Gastrocnemius medialis (tissue), 4 donors: ENCODE measurements at regions of chr7 and their contacts with region 1.

Region 1: GRCh38 chr7:28408960-28409715 is 3.2 kb upstream of the CREB5 start:
- DNase-seq: peak; percentile 94 to 98
- ATAC-seq: peak; percentile 72 to 80
- H3K4me3 ChIP-seq: peak overlapping the region; percentile 61 to 92 (median 72)
- H3K27ac ChIP-seq: peak overlapping the region; percentile 91 to 98 (median 94)
- H3K4me1 ChIP-seq: peaks cover 9 to 21% of the 10 kb centered on the region in 2 donors
- H3K27me3 ChIP-seq: no peaks in the 10 kb centered on the region
- CTCF ChIP-seq: no peak
- POLR2A ChIP-seq: peak; percentile 90 to 91

Region 2: GRCh38 chr7:27662490-27663205 is 746.5 kb before region 1 on chr7 and contains the start of gene HIBADH:
- in situ Hi-C with region 1: no loop called
- intact Hi-C with region 1: loop called (anchors 10 kb)
- DNase-seq: peak; percentile 99 to 100
- ATAC-seq: peak; percentile 96 to 98
- H3K4me3 ChIP-seq: peak within 1 kb of the TSS; percentile 73 to 99 (median 92)
- H3K27ac ChIP-seq: peak within 1 kb of the TSS; percentile 95 to 100 (median 97)
- H3K4me1 ChIP-seq: peaks cover 10 to 14% of the 10 kb centered on the region in 2 donors
- H3K27me3 ChIP-seq: no peaks in the 10 kb centered on the region
- CTCF ChIP-seq: peak; percentile 12 to 46 (median 29)
- POLR2A ChIP-seq: peak; percentile 96 to 99
- total RNA-seq, gene HIBADH: 42.2 to 56.4 (median 49.0) TPM

Region 3: GRCh38 chr7:28179120-28180030 is 229.8 kb before region 1 on chr7:
- in situ Hi-C with region 1: no loop called
- intact Hi-C with region 1: loop called (anchors 5 kb)
- DNase-seq: peak; percentile 55 to 59
- ATAC-seq: peak; percentile 77 to 84
- H3K4me3 ChIP-seq: peak overlapping the region; percentile 53 to 97 (median 68)
- H3K27ac ChIP-seq: peak overlapping the region; percentile 66 to 87 (median 84)
- H3K4me1 ChIP-seq: peaks cover 18 to 21% of the 10 kb centered on the region in 2 donors
- H3K27me3 ChIP-seq: no peaks in the 10 kb centered on the region
- CTCF ChIP-seq: no peak
- POLR2A ChIP-seq: peak; percentile 27 to 41

Region 4: GRCh38 chr7:28520074-28521015 is 111.2 kb after region 1 on chr7:
- in situ Hi-C with region 1: no loop called
- intact Hi-C with region 1: loop called (anchors 10 kb)
- DNase-seq: peak in 1 of 2 donors; percentile 20
- ATAC-seq: peak; percentile 94 to 96
- H3K4me3 ChIP-seq: no peak overlapping the region
- H3K27ac ChIP-seq: peak overlapping the region in 2 of 4 donors; percentile 38 to 57
- H3K4me1 ChIP-seq: peaks cover 10 to 17% of the 10 kb centered on the region in 2 donors
- H3K27me3 ChIP-seq: no peaks in the 10 kb centered on the region
- CTCF ChIP-seq: no peak
- POLR2A ChIP-seq: no peak

Region 5: DNA sequence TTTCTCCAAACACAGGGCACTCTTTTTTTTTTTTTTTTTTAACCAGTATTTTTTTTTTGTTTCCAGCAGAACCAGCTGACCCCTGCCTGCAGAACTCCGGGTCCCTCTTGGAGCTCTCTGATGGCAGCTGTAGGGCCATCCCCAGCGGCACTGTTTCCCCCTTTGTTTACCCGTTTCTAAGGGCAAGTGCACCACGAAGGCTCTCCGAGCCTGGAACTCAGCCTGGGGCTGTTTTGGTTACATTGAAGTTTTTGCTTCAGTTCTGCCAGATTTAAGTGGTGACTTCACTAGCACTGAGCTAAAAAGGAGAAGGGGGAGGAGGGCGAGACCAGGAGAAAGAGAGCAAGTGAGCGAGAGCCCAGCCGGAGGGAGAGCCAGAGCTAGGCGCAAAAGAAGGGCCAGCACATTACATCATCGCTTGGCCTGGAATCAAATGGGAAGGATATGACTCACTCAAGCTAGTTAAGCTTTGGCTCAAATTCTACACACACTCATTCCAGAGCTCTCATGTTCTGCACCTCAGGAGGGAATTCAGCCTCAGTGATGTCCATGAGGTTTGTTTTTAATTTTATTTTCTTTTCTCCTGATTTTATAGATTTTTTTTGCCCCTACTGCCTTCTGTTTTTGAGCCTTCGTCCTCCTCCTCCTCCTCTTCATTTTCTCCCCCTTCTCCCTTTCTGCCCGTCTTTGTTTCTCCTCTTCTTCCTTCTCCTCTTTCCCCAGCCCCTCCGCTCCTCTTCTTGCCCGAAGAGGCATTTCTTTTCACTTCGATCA is 276.7 kb after region 1 on chr7:
- in situ Hi-C with region 1: no loop called
- intact Hi-C with region 1: loop called (anchors 2 kb)
- DNase-seq: peak; percentile 93 to 94
- ATAC-seq: peak; percentile 97
- H3K4me3 ChIP-seq: peak overlapping the region; percentile 49 to 68 (median 56)
- H3K27ac ChIP-seq: peak overlapping the region; percentile 76 to 87 (median 80)
- H3K4me1 ChIP-seq: peaks cover 33 to 43% of the 10 kb centered on the region in 2 donors
- H3K27me3 ChIP-seq: no peaks in the 10 kb centered on the region
- CTCF ChIP-seq: no peak
- POLR2A ChIP-seq: peak; percentile 65 to 80

Region 6: DNA sequence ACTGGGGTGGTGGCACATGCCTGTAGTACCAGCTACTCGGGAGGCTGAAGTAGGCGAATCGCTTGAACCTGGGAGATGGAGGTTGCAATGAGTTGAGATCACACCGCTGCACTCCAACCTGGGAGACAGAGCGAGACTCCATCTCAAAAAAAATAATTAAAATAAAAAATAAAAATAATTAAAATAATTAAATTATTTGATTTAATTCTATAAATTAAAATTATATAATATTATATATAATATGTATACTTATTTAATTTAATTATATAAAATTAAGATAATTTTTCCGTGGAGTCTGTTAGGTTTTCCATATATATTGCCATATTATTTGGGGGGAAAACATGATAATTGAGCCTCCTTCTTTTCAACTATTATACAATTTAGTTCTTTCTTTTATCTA is 1409.2 kb after region 1 on chr7:
- in situ Hi-C with region 1: no loop called
- intact Hi-C with region 1: no loop called
- DNase-seq: no peak
- ATAC-seq: no peak
- H3K4me3 ChIP-seq: no peak overlapping the region
- H3K27ac ChIP-seq: no peak overlapping the region
- H3K4me1 ChIP-seq: peaks cover 5 to 14% of the 10 kb centered on the region in 2 donors
- H3K27me3 ChIP-seq: no peaks in the 10 kb centered on the region
- CTCF ChIP-seq: no peak
- POLR2A ChIP-seq: no peak